Head of caudate nucleus (tissue), 42 donors: ENCODE measurements at regions of chr13 and their contacts with region 1.

Region 1: GRCh38 chr13:53782488-53782961 is 753.9 kb downstream of the OLFM4 start:
- DNase-seq: peak in 36 of 42 donors; percentile 4 to 79 (median 46)

Region 2: DNA sequence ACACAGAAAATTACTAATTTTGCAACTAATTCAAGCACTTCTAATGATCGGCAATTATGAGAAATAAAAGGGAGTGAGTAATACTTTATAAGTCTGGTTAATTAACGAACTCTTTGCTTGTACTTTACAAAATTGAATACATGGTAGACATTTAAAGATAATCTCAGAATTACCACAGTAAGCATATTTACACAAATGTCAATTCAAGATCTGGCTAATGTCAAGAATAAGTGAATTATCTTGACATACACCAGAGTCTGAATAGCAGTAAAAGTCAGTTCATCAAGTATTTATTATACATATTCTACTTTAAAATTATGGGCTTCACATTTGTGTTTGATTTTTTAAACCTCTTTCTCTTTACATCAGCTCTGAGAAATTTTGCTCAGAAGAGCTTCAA is 110.5 kb before region 1 on chr13:
- intact Hi-C with region 1: no loop called
- DNase-seq: no peak

Region 3: DNA sequence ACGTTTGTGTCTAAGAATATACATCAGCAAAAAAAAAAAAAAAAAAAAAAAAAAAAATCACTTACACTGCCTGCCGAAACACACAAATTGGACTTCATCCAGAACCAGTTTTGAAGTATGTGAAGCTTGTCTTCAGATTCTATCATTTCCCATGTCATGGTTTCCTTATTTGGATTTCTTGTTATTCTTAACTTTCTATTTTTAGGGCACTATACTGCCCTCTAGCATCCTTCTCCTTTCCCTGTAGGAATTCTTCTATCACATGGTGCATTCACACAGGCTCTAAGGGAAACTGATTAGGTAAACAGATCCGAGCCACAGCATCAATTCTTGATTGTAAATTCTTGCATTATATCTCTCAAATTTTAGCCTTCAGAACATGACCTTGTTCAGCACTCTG is 753.6 kb after region 1 on chr13:
- intact Hi-C with region 1: loop called (anchors 10 kb)
- DNase-seq: peak in 1 of 42 donors; percentile 15